ENCODE measurements at regions of chr5 and their contacts with region 1.

Region 1: GRCh38 chr5:93582677-93583438 is at the start of gene NR2F1:
- DNase-seq: peak; percentile 99
- H3K4me3 ChIP-seq: peak within 1 kb of the TSS; percentile 76 to 93 (median 85)
- H3K27ac ChIP-seq: peak within 1 kb of the TSS; percentile 86
- H3K4me1 ChIP-seq: peaks cover 25% of the 10 kb centered on the region
- H3K27me3 ChIP-seq: no peaks in the 10 kb centered on the region
- CTCF ChIP-seq: no peak
- POLR2A ChIP-seq: peak; percentile 89
- total RNA-seq, gene NR2F1: 21.5 and 23.9 TPM in 2 replicates

Region 2: DNA sequence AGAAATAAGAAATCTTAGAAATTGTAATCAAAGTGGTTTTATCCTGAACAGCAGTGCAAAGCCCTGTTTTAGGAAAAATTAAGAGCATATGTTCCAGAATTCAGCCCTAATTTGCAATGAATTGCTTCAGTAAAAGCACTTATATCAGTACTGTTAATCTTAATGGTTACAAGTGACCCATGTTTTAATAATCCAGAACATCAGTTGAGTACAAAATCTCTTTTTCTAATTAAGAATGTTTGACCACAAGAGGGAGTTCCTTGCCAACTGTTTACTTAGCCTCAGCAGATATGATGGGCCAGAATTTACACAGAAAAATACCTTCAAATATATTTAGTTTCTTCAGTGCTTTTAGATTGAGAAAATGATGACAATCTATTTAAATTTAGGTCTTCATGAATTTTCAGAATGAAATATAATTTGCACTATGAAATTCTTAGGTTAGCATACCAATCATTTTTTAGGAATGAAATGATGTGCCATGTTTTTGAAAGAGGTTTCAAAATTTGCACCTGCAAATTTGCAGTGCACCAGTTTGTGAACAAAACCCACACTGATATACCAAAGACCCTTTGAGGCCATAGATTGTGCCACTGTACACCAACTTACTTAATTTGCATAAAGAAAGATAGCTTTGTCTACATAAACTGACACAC is 1273.4 kb before region 1 on chr5:
- CTCF ChIA-PET with region 1: no interaction called
- POLR2A ChIA-PET with region 1: no interaction called
- dilution Hi-C with region 1: no loop called
- intact Hi-C with region 1: loop called (anchors 5 kb)
- DNase-seq: peak; percentile 31
- H3K4me3 ChIP-seq: no peak overlapping the region
- H3K27ac ChIP-seq: no peak overlapping the region
- H3K4me1 ChIP-seq: no peaks in the 10 kb centered on the region
- H3K27me3 ChIP-seq: no peaks in the 10 kb centered on the region
- CTCF ChIP-seq: peak in 1 of 2 donors; percentile 24
- POLR2A ChIP-seq: no peak

Region 3: GRCh38 chr5:93078082-93079038 is 504.5 kb before region 1 on chr5:
- CTCF ChIA-PET with region 1: no interaction called
- POLR2A ChIA-PET with region 1: no interaction called
- dilution Hi-C with region 1: no loop called
- intact Hi-C with region 1: loop called (anchors 5 kb)
- DNase-seq: peak; percentile 99
- H3K4me3 ChIP-seq: no peak overlapping the region
- H3K27ac ChIP-seq: peak overlapping the region; percentile 89
- H3K4me1 ChIP-seq: peaks cover 18% of the 10 kb centered on the region
- H3K27me3 ChIP-seq: no peaks in the 10 kb centered on the region
- CTCF ChIP-seq: no peak
- POLR2A ChIP-seq: peak; percentile 50

Region 4: DNA sequence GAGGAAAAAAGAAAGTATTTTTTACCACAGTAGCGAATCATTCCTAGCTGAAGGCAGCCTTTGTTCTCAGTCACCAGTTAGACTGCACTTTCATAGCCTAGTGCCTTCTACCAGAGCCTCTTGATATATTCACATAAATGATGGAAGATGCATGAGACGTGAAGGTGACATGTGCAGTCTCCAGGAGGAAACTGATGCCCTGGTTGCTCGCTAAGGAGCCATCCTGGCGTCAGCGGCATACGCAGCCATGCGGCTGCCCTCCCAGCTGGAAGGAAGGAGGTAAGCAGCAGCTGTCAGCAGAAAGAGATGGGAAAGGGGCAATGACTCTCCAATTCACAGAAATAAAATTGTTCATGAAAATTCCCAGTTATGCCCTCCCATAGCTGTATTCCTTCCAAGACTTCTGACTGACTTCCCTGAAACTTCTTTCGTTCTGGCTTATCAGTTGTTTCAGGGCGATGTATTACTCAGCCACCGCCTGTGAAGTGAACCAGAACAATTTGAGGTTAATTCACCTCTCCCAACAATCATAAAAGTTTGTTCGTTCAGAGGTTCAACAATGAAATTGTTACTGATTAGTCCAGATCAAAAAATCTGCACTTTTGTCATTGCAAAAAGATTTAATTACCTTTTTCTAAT is 333.1 kb before region 1 on chr5:
- CTCF ChIA-PET with region 1: no interaction called
- POLR2A ChIA-PET with region 1: no interaction called
- dilution Hi-C with region 1: no loop called
- intact Hi-C with region 1: loop called (anchors 2 kb)
- DNase-seq: peak; percentile 87
- H3K4me3 ChIP-seq: peak overlapping the region in 2 of 3 experiments; percentile 14 to 58
- H3K27ac ChIP-seq: peak overlapping the region; percentile 88
- H3K4me1 ChIP-seq: peaks cover 26% of the 10 kb centered on the region
- H3K27me3 ChIP-seq: no peaks in the 10 kb centered on the region
- CTCF ChIP-seq: no peak
- POLR2A ChIP-seq: peak; percentile 57

Region 5: GRCh38 chr5:93497096-93497495 is 85.8 kb before region 1 on chr5:
- CTCF ChIA-PET with region 1: no interaction called
- POLR2A ChIA-PET with region 1: no interaction called
- dilution Hi-C with region 1: no loop called
- intact Hi-C with region 1: loop called (anchors 2 kb)
- DNase-seq: peak; percentile 86
- H3K4me3 ChIP-seq: no peak overlapping the region
- H3K27ac ChIP-seq: peak overlapping the region; percentile 70
- H3K4me1 ChIP-seq: peaks cover 11% of the 10 kb centered on the region
- H3K27me3 ChIP-seq: no peaks in the 10 kb centered on the region
- CTCF ChIP-seq: no peak
- POLR2A ChIP-seq: no peak

Region 6: GRCh38 chr5:93644760-93645159 is 61.9 kb after region 1 on chr5:
- CTCF ChIA-PET with region 1: no interaction called
- POLR2A ChIA-PET with region 1: no interaction called
- dilution Hi-C with region 1: no loop called
- intact Hi-C with region 1: no loop called
- DNase-seq: no peak
- H3K4me3 ChIP-seq: no peak overlapping the region
- H3K27ac ChIP-seq: no peak overlapping the region
- H3K4me1 ChIP-seq: no peaks in the 10 kb centered on the region
- H3K27me3 ChIP-seq: no peaks in the 10 kb centered on the region
- CTCF ChIP-seq: no peak
- POLR2A ChIP-seq: no peak

Region 7: GRCh38 chr5:93658044-93658443 is 75.2 kb after region 1 on chr5:
- CTCF ChIA-PET with region 1: no interaction called
- POLR2A ChIA-PET with region 1: no interaction called
- dilution Hi-C with region 1: no loop called
- intact Hi-C with region 1: no loop called
- DNase-seq: no peak
- H3K4me3 ChIP-seq: no peak overlapping the region
- H3K27ac ChIP-seq: no peak overlapping the region
- H3K4me1 ChIP-seq: no peaks in the 10 kb centered on the region
- H3K27me3 ChIP-seq: no peaks in the 10 kb centered on the region
- CTCF ChIP-seq: no peak
- POLR2A ChIP-seq: no peak

Region 8: DNA sequence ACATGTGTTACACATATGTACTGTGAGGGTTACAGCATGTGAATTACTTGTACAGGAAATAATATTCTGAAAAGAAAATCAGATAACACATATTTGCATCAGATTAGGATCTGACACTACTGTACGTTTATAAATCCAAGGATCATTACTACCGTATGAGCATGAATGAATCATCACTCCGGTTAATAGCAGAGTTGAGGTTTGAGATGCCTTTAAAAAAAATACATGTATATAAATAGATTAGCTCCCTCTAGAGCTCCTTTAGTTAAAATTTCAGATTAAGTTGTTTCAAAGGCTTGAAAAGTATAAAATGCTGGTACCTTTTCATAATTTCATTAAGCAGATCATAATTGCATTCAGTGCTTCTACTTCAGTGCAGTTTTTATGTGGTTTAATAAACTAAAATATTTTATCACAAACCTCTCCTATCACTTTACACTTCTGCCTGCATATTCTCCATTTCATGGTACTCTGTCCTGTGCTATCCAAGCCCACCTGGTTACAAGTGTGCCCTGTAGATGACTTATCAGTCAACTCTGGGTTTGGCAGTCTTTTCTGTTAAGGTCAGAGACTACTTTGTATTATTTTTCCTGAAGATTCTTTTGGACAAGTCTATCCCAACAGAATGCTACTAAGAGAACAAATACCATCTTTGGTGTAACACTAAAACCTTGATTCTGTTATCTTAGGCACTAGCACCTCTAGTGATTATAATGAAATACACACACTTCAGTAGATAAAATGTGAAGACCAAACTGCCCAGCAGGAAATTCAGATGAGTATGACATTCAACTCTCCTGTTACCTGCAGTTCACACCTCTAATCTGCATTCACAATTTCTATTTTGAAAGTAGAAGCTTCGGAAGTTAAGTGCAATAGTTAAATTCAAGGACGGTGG is 206.6 kb after region 1 on chr5:
- CTCF ChIA-PET with region 1: interaction called, 4 read pairs
- POLR2A ChIA-PET with region 1: interaction called, 4 read pairs
- dilution Hi-C with region 1: no loop called
- intact Hi-C with region 1: loop called (anchors 1 kb)
- DNase-seq: peak; percentile 56
- H3K4me3 ChIP-seq: no peak overlapping the region
- H3K27ac ChIP-seq: no peak overlapping the region
- H3K4me1 ChIP-seq: peaks cover 10% of the 10 kb centered on the region
- H3K27me3 ChIP-seq: no peaks in the 10 kb centered on the region
- CTCF ChIP-seq: no peak
- POLR2A ChIP-seq: no peak